Endothelial cell of umbilical vein (primary cell): ENCODE measurements at regions of chr5 and their contacts with region 1.

Region 1: DNA sequence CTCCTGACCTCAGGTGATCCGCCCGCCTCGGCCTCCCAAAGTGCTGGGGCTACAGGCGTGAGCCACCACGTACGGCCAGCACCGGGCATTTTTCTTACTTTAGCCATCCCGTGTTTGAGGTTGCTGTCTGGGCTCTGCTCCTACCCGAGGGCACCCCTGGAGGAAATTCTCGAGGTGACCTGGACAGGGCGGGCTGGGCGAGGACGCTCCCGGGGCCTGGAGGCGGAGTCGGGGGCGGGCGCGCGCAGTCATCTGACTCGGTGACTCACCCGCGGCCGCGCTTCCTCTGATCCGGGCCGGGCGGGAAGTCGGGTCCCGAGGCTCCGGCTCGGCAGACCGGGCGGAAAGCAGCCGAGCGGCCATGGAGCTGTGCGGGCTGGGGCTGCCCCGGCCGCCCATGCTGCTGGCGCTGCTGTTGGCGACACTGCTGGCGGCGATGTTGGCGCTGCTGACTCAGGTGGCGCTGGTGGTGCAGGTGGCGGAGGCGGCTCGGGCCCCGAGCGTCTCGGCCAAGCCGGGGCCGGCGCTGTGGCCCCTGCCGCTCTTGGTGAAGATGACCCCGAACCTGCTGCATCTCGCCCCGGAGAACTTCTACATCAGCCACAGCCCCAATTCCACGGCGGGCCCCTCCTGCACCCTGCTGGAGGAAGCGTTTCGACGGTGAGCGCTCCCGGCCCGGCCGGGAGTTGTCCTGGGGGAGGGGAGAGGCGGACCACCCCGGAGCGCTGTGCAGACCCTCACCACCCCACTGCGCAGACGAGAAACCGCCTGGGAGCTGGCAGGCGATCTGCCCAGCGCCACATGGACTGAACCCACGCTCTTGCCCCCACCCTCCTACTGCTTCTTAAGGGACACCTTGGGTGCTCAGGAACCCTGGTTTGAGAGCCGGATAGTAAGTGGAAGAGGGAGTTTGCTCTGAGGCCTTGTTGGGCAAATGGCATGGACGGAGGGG is at the start of gene HEXB:
- DNase-seq: peak; percentile 84
- H3K4me3 ChIP-seq: peak within 1 kb of the TSS; percentile 26 to 89 (median 64)
- H3K27ac ChIP-seq: peak within 1 kb of the TSS; percentile 60
- H3K4me1 ChIP-seq: peaks cover 20% of the 10 kb centered on the region
- H3K27me3 ChIP-seq: no peaks in the 10 kb centered on the region
- CTCF ChIP-seq: no peak
- POLR2A ChIP-seq: peak; percentile 97
- total RNA-seq, gene HEXB: 176 and 182 TPM in 2 replicates

Region 2: DNA sequence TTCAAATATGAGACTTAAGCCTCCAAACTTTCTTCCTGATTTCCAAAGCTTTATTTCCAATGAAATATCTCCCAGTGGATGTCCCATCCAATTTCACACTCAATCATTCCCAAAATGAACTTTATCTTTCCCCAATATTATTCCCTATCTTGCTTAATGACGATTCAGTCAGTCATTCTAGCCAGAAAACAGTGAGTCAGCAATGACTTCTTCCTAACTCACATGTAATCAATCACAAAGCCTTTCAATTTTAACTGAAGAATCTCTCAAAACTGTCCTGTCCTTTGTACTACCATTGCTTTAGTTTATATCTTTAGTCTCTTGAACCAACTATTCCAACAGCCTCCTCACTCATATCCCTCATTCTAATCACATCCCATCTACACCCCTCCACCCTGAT is 116.8 kb after region 1 on chr5:
- CTCF ChIA-PET with region 1: no interaction called
- POLR2A ChIA-PET with region 1: no interaction called
- dilution Hi-C with region 1: no loop called
- intact Hi-C with region 1: no loop called
- DNase-seq: no peak
- H3K4me3 ChIP-seq: no peak overlapping the region
- H3K27ac ChIP-seq: no peak overlapping the region
- H3K4me1 ChIP-seq: no peaks in the 10 kb centered on the region
- H3K27me3 ChIP-seq: peaks cover 2% of the 10 kb centered on the region in 2 experiments
- CTCF ChIP-seq: no peak
- POLR2A ChIP-seq: no peak

Region 3: GRCh38 chr5:74865804-74866595 is 180.8 kb after region 1 on chr5 and contains the start of gene FAM169A:
- CTCF ChIA-PET with region 1: no interaction called
- POLR2A ChIA-PET with region 1: interaction called, 10 read pairs
- dilution Hi-C with region 1: no loop called
- intact Hi-C with region 1: no loop called
- DNase-seq: no peak
- H3K4me3 ChIP-seq: peak within 1 kb of the TSS; percentile 32 to 44 (median 40)
- H3K27ac ChIP-seq: no peak within 1 kb of the TSS
- H3K4me1 ChIP-seq: peaks cover 11% of the 10 kb centered on the region
- H3K27me3 ChIP-seq: peaks cover 25 to 34% of the 10 kb centered on the region in 2 experiments
- CTCF ChIP-seq: no peak
- POLR2A ChIP-seq: no peak
- total RNA-seq, gene FAM169A: 0.62 and 0.72 TPM in 2 replicates